ENCODE measurements at regions of chr5 and their contacts with region 1.

Region 1: GRCh38 chr5:4879693-4880303 is 260.3 kb upstream of the ADAMTS16 start:
- DNase-seq: peak; percentile 92
- ATAC-seq: peak; percentile 90
- H3K4me3 Mint-ChIP-seq: no peak overlapping the region
- H3K27ac Mint-ChIP-seq: no peak overlapping the region
- H3K4me1 Mint-ChIP-seq: peaks cover 10% of the 10 kb centered on the region
- H3K27me3 Mint-ChIP-seq: no peaks in the 10 kb centered on the region; the same call in 1 of the 2 replicates
- CTCF ChIP-seq: peak; percentile 90

Region 2: GRCh38 chr5:4855880-4856279 is 23.9 kb before region 1 on chr5:
- CTCF ChIA-PET with region 1: no interaction called
- POLR2A ChIA-PET with region 1: no interaction called
- DNase-seq: no peak
- ATAC-seq: no peak
- H3K4me3 Mint-ChIP-seq: no peak overlapping the region
- H3K27ac Mint-ChIP-seq: no peak overlapping the region
- H3K4me1 Mint-ChIP-seq: peaks cover 14% of the 10 kb centered on the region
- H3K27me3 Mint-ChIP-seq: no peaks in the 10 kb centered on the region
- CTCF ChIP-seq: no peak

Region 3: DNA sequence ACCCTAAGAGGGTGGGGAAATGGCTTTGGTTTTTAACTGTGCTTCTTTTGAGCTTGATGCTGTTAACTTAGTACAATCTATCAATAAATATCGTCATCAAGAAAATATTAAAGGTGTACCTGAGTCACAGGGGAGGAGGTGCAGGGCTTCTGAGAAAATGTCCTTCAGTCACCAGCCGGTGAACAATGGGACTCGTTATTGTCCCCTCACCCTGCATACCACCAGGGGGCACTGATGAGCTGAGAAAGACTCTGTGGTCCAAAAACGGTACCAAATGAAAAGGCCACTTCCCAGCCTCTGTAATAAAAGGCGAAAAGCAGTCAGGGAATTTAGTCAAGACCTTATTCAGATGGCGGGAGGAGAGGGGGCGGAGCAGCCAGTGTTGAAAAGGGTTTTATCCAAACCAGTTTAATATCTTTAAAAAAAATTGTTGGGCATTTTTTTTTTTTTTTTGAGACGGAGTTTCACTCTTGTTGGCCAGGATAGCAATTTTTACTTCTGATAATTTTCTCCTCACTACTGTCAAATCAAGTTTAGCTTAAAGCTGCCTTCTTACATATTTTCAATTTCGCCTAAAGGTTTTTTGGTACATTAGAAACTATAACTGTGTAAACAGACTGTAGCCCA is 11.6 kb before region 1 on chr5:
- CTCF ChIA-PET with region 1: interaction called, 11 read pairs
- POLR2A ChIA-PET with region 1: no interaction called
- DNase-seq: peak; percentile 82
- ATAC-seq: peak; percentile 86
- H3K4me3 Mint-ChIP-seq: no peak overlapping the region
- H3K27ac Mint-ChIP-seq: no peak overlapping the region
- H3K4me1 Mint-ChIP-seq: peaks cover 8% of the 10 kb centered on the region; the same call in 1 of the 2 replicates
- H3K27me3 Mint-ChIP-seq: no peaks in the 10 kb centered on the region; the same call in 1 of the 2 replicates
- CTCF ChIP-seq: peak; percentile 76

Region 4: GRCh38 chr5:4941957-4942830 is 62.4 kb after region 1 on chr5:
- CTCF ChIA-PET with region 1: interaction called, 18 read pairs
- POLR2A ChIA-PET with region 1: no interaction called
- DNase-seq: peak; percentile 75
- ATAC-seq: peak; percentile 94
- H3K4me3 Mint-ChIP-seq: no peak overlapping the region
- H3K27ac Mint-ChIP-seq: no peak overlapping the region
- H3K4me1 Mint-ChIP-seq: peaks cover 16% of the 10 kb centered on the region
- H3K27me3 Mint-ChIP-seq: peaks cover 2% of the 10 kb centered on the region; the same call in 1 of the 2 replicates
- CTCF ChIP-seq: peak; percentile 97

Region 5: DNA sequence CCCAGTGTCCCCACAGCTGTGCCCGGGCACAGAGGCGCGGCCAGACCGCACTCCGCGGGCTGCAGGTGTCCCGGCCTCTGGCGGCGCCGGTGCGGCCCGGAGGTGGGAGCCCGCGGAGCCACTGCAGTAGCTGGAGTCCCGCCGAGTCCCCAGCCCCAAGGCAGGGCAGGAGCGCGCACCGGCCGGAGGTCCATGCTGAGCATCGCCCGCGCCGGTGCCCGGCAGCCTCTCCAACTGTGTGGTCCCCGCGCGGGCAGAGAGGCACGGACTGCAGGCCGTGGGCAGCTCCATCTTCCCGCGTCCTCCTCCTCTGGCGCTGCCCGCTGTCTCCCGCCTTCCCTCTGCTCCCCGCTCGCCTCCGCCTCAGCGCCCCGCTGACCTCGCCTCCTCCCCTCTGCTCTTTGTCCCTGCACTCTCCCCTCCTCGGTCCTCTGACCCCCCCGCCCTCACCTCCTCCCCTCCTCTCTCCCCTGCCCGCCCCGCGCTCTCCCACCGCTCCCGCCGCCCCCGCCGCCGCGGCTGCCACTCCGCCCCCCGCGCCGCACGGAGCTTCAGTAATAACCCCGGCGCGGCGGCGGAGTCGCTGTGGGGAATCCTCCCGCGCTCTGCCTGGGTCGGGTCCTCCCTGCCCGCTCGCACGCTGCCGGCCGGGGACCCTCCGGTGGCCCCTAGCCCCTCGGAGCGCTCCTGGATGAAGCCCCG is 260.1 kb after region 1 on chr5 and contains the start of gene ADAMTS16:
- CTCF ChIA-PET with region 1: interaction called, 23 read pairs
- POLR2A ChIA-PET with region 1: no interaction called
- DNase-seq: peak; percentile 75
- ATAC-seq: peak; percentile 71
- H3K4me3 Mint-ChIP-seq: peak within 1 kb of the TSS; percentile 85
- H3K27ac Mint-ChIP-seq: peak within 1 kb of the TSS; percentile 48
- H3K4me1 Mint-ChIP-seq: peaks cover 53% of the 10 kb centered on the region
- H3K27me3 Mint-ChIP-seq: peaks cover 6% of the 10 kb centered on the region
- CTCF ChIP-seq: no peak
- total RNA-seq, gene ADAMTS16: 30.1 to 34.6 TPM (median 30.7 TPM) in 3 replicates

Region 6: DNA sequence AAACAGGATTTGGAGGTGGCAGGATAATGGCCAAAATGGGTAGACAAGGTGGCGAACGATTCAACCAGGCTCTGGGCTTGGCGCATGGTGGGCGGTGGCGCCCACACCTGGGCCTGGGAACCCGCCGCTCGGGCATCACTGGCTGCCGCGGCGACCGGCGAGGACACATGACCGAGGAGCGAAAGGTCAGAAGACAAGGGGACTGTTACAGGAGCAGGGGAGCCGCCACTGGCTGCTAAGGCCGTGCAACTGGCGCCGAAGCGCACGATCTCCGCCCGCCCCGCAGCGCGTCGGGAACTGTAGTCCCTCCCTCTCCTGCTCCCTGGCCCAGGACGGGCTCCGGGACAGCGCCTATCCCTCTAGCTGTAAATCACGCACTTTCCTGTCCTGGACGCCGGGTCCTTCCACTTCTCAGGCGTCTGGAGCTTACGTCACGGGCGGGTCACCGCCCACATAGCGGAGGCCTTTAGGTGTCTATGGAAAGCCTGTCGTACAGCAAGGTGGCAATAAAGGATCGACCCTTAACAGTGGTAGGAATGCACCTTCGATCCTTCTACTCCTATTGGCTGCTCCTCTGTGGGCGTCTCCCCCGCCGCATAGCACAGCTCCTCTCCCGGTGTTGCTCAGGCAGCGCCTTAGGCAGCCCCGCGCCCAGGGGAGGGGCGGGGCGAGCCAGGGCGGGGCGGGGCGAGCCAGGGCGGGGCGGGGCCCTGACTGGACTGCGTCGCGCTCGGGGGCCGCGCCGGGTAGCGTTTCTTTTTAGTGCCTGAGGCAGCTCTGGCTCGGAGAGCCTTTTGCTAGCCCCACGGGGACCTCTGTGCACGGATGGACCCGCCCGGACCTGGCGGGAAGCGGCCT is 542.4 kb after region 1 on chr5 and contains the start of gene ICE1:
- CTCF ChIA-PET with region 1: interaction called, 43 read pairs
- POLR2A ChIA-PET with region 1: no interaction called
- DNase-seq: peak; percentile 97
- ATAC-seq: peak; percentile 95
- H3K4me3 Mint-ChIP-seq: peak within 1 kb of the TSS; percentile 89
- H3K27ac Mint-ChIP-seq: peak within 1 kb of the TSS; percentile 96
- H3K4me1 Mint-ChIP-seq: peaks cover 38% of the 10 kb centered on the region
- H3K27me3 Mint-ChIP-seq: no peaks in the 10 kb centered on the region; the same call in 1 of the 2 replicates
- CTCF ChIP-seq: no peak
- total RNA-seq, gene ICE1: 40.7 to 48.9 TPM (median 45.3 TPM) in 3 replicates

Measured in WTC11 (cell line).